CD8-positive, alpha-beta T cell (primary cell): ENCODE measurements at regions of chr7 and their contacts with region 1.

Region 1: DNA sequence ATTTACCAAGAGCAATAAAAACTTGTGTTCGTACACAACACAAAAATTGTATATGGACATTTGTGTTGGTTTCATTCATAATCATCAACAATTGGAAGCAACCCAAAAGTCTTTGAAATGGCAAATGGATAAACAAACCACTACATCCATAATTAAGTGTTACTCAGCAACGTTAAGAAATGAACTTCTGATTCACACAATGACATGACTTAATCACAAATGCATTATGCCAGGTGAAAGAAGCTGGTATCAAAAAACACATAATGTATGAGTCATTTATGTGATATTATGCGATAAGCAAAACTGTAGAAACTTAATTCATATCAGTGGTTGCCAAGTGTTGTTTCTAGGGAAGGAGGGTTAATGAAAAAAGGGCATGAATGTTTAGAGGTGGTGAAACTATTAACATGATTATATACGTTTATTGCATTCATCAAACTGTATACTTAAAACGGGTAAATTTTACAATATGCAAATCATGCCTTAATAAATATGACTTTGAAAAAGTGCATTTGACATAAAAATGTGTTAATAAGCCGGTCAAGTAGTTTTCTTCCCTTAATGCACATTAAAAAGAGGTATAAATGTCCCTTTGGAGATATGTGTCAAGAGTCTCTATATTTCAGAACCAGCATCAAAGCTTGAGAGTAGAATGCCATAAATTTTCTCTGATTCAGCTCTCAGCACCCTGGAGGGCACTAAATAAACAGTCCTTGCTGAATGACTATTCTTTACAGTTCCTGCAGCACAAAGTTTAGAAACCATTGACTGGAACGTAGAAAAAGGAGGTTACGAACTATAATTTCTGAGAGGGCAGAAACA is 84.8 kb upstream of the GRM3 start:
- DNase-seq: no peak
- ATAC-seq: no peak
- H3K4me3 ChIP-seq: no peak overlapping the region
- H3K4me3 Mint-ChIP-seq: no peak overlapping the region
- H3K27ac ChIP-seq: no peak overlapping the region
- H3K27ac Mint-ChIP-seq: no peak overlapping the region
- H3K4me1 ChIP-seq: no peaks in the 10 kb centered on the region
- H3K4me1 Mint-ChIP-seq: no peaks in the 10 kb centered on the region
- H3K27me3 ChIP-seq: no peaks in the 10 kb centered on the region
- H3K27me3 Mint-ChIP-seq: no peaks in the 10 kb centered on the region
- CTCF ChIP-seq: no peak

Region 2: DNA sequence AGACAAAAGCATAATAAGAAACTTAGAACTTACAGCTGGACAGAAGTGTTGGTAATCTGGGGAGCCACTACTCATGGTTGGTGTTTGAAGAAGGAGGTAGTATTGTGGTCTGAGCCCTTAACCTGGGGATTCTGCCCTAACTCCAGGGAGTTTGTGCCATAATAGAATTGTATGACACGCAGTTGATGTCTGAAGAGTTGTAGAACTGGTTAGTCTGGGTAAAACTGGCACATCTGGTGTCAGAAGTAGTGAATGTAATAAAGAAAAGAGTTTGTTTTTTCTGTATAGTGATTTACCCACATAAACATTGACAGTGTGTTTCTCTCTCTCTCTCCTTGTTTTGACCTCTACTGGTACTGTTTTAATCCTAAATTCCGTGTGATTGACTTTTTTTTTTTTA is 923.9 kb before region 1 on chr7:
- CTCF ChIA-PET with region 1: no interaction called
- POLR2A ChIA-PET with region 1: no interaction called
- intact Hi-C with region 1: loop called in 1 of 2 experiments (anchors 5 kb)
- DNase-seq: no peak
- ATAC-seq: no peak
- H3K4me3 ChIP-seq: no peak overlapping the region
- H3K4me3 Mint-ChIP-seq: no peak overlapping the region
- H3K27ac ChIP-seq: no peak overlapping the region
- H3K27ac Mint-ChIP-seq: no peak overlapping the region
- H3K4me1 ChIP-seq: no peaks in the 10 kb centered on the region
- H3K4me1 Mint-ChIP-seq: no peaks in the 10 kb centered on the region
- H3K27me3 ChIP-seq: no peaks in the 10 kb centered on the region
- H3K27me3 Mint-ChIP-seq: no peaks in the 10 kb centered on the region
- CTCF ChIP-seq: no peak